ENCODE measurements at regions of chr20 and their contacts with region 1.

Region 1: DNA sequence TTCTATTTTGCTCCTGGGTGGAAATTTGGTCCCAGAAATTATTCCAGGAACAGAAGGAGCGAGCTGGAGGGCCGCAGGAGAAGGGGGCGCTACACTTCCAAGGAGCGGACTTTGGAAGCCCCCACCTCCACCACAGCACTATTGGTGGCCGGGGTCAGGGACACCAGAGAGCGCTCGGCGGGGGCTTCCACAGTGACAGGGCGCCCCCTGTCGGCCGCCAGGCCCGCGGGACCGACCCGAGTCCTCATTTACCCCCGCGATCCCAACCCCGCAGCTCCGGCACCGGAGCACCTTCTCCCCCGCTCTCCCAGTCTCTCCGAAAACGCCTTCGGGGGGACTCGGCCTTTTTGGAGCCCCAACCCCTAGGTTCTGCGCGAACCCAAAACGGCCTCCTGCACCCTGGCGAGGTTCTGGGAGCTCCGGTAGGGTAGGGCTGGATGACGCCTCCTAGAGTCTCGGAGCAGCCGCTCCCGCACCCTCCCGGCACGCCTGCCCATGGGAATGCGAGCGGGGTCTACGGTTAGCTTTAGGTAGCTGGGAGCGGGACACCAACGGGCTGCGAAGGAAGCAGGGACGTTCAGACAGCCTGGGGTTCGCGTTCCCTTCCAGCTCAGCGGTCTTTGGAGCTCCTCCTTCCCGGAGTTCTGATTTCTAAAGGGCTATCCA is 2.4 kb upstream of the FOXA2 start:
- DNase-seq: peak; percentile 36
- H3K4me3 Mint-ChIP-seq: no peak overlapping the region
- H3K27ac Mint-ChIP-seq: no peak overlapping the region
- H3K4me1 Mint-ChIP-seq: no peaks in the 10 kb centered on the region
- H3K27me3 Mint-ChIP-seq: peaks cover 18% of the 10 kb centered on the region
- CTCF ChIP-seq: peak; percentile 83

Region 2: GRCh38 chr20:22333885-22334545 is 252.8 kb before region 1 on chr20:
- CTCF ChIA-PET with region 1: interaction called, 81 read pairs
- POLR2A ChIA-PET with region 1: interaction called, 5 read pairs
- intact Hi-C with region 1: loop called (anchors 1 kb)
- DNase-seq: peak; percentile 66
- H3K4me3 Mint-ChIP-seq: no peak overlapping the region
- H3K27ac Mint-ChIP-seq: no peak overlapping the region
- H3K4me1 Mint-ChIP-seq: peaks cover 10% of the 10 kb centered on the region
- H3K27me3 Mint-ChIP-seq: peaks cover 27% of the 10 kb centered on the region
- CTCF ChIP-seq: peak; percentile 78

Region 3: GRCh38 chr20:22348010-22348409 is 238.8 kb before region 1 on chr20:
- CTCF ChIA-PET with region 1: interaction called, 81 read pairs
- POLR2A ChIA-PET with region 1: interaction called, 4 read pairs
- intact Hi-C with region 1: no loop called
- DNase-seq: no peak
- H3K4me3 Mint-ChIP-seq: no peak overlapping the region
- H3K27ac Mint-ChIP-seq: peak overlapping the region; percentile 55
- H3K4me1 Mint-ChIP-seq: peaks cover 8% of the 10 kb centered on the region
- H3K27me3 Mint-ChIP-seq: no peaks in the 10 kb centered on the region
- CTCF ChIP-seq: no peak

Region 4: DNA sequence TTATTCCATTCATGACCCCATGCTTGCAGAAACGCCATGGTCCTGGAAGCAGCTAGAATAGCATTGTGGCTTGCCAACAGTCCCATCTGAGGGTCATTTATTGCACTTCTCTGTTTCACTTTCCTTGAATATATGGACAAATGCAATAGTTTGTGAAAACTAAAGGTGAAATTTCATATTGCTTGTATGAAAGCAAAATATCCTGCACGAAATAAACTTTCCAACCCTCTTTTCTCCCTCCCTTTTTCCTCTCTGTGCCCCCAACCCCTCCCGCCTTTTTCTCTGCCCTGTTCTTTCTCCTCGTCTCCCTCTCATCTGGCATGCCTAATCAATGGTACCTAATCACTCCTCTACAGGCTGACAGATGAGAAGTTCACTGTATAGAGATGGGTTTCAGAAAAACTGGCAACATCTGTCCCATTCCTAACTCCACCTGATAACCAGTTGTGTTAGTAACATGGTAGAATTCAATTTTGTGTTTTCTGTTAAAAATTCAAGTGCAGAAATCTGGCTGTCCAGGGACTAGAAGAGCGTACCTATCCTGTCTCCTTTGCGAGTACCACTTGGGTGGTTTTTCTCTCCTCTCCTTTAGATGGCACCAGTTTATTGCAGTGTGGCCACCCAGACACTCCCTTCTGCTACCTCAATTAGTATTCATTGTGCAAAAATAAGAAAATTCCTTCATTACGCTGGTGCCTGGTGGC is 201.0 kb before region 1 on chr20:
- CTCF ChIA-PET with region 1: interaction called, 13 read pairs
- POLR2A ChIA-PET with region 1: no interaction called
- intact Hi-C with region 1: loop called (anchors 1 kb)
- DNase-seq: peak; percentile 50
- H3K4me3 Mint-ChIP-seq: no peak overlapping the region
- H3K27ac Mint-ChIP-seq: no peak overlapping the region
- H3K4me1 Mint-ChIP-seq: peaks cover 51% of the 10 kb centered on the region
- H3K27me3 Mint-ChIP-seq: no peaks in the 10 kb centered on the region
- CTCF ChIP-seq: peak; percentile 27

Region 5: GRCh38 chr20:22453239-22454080 is 133.3 kb before region 1 on chr20:
- CTCF ChIA-PET with region 1: interaction called, 6 read pairs
- POLR2A ChIA-PET with region 1: no interaction called
- intact Hi-C with region 1: loop called (anchors 1 kb)
- DNase-seq: peak; percentile 67
- H3K4me3 Mint-ChIP-seq: no peak overlapping the region
- H3K27ac Mint-ChIP-seq: peak overlapping the region; percentile 31
- H3K4me1 Mint-ChIP-seq: no peaks in the 10 kb centered on the region
- H3K27me3 Mint-ChIP-seq: no peaks in the 10 kb centered on the region
- CTCF ChIP-seq: peak; percentile 74

Region 6: DNA sequence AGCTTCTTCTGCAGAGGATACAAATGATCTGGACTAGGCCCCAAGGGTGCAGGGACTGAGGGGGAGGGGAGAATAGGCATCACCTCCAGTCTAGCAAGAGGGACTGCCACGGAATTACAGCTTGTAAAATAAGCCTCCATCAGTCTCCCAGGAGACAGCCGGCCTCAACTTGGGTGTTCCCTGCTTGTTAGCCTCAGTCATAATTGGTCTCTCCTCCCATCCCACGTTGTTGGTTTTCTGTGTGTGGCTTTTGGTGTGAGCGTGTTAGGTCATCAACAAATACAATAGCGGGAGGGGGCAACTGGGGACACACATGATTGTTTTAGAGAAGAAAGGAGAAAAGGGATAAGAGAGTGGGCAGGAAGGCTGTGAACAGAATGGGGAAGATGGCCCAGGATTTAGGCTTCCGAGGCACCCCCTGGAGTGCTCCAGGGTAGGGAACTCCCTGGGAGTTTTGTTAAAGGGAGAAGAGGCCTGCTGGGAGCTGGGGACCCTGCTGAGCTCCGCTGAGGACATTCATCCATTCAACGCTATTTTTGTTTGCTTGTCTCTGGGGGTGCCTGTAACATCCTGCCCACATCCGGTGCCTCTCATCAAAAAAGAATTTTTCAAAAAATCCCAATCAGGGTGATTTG is 11.6 kb before region 1 on chr20:
- CTCF ChIA-PET with region 1: interaction called, 24 read pairs
- POLR2A ChIA-PET with region 1: interaction called, 4 read pairs
- intact Hi-C with region 1: no loop called
- DNase-seq: no peak
- H3K4me3 Mint-ChIP-seq: no peak overlapping the region
- H3K27ac Mint-ChIP-seq: no peak overlapping the region
- H3K4me1 Mint-ChIP-seq: peaks cover 7% of the 10 kb centered on the region
- H3K27me3 Mint-ChIP-seq: peaks cover 37% of the 10 kb centered on the region
- CTCF ChIP-seq: no peak

Region 7: GRCh38 chr20:22601361-22602141 is 14.8 kb after region 1 on chr20:
- CTCF ChIA-PET with region 1: interaction called, 25 read pairs
- POLR2A ChIA-PET with region 1: no interaction called
- intact Hi-C with region 1: no loop called
- DNase-seq: peak; percentile 9
- H3K4me3 Mint-ChIP-seq: no peak overlapping the region
- H3K27ac Mint-ChIP-seq: no peak overlapping the region
- H3K4me1 Mint-ChIP-seq: no peaks in the 10 kb centered on the region
- H3K27me3 Mint-ChIP-seq: no peaks in the 10 kb centered on the region
- CTCF ChIP-seq: no peak